ENCODE measurements at regions of chr14 and their contacts with region 1.

Region 1: GRCh38 chr14:25803386-25804018 is 753.6 kb upstream of the STXBP6 start:
- DNase-seq: no peak
- H3K4me3 ChIP-seq: no peak overlapping the region
- H3K27ac ChIP-seq: no peak overlapping the region
- H3K4me1 ChIP-seq: no peaks in the 10 kb centered on the region
- H3K27me3 ChIP-seq: no peaks in the 10 kb centered on the region
- CTCF ChIP-seq: no peak
- EP300 ChIP-seq: no peak
- POLR2A ChIP-seq: no peak

Region 2: GRCh38 chr14:26113930-26114329 is 310.4 kb after region 1 on chr14:
- in situ Hi-C with region 1: no loop called
- intact Hi-C with region 1: no loop called
- DNase-seq: no peak
- H3K4me3 ChIP-seq: no peak overlapping the region
- H3K27ac ChIP-seq: no peak overlapping the region
- H3K4me1 ChIP-seq: no peaks in the 10 kb centered on the region
- H3K27me3 ChIP-seq: no peaks in the 10 kb centered on the region
- CTCF ChIP-seq: no peak
- EP300 ChIP-seq: no peak
- POLR2A ChIP-seq: no peak

Region 3: GRCh38 chr14:26984311-26985177 is 1181.0 kb after region 1 on chr14:
- in situ Hi-C with region 1: loop called in 1 of 4 experiments (anchors 25 kb)
- intact Hi-C with region 1: no loop called
- DNase-seq: peak; percentile 64
- H3K4me3 ChIP-seq: no peak overlapping the region
- H3K27ac ChIP-seq: no peak overlapping the region
- H3K4me1 ChIP-seq: no peaks in the 10 kb centered on the region
- H3K27me3 ChIP-seq: no peaks in the 10 kb centered on the region
- CTCF ChIP-seq: peak; percentile 58 to 69 (median 65)
- EP300 ChIP-seq: no peak
- POLR2A ChIP-seq: no peak

Region 4: DNA sequence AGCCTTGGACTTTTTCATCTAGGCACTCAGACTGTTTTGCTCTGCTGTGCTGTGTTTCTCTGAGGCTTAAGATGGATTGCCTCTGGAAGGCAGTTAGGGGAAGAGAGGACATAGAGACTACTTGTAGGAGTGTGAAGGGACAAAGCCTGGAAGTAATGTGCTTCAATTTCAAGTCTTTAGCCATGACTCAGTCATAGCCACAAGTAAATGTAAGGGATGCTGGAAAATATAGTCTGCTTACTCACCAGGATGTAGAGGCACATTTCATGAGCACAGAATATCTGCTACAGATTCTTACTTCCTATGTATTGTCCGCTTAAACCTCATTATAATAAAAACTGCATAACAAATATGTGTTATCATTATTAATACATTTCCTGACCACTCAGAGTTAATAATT is 1588.7 kb after region 1 on chr14:
- in situ Hi-C with region 1: no loop called
- intact Hi-C with region 1: loop called (anchors 5 kb)
- DNase-seq: no peak
- H3K4me3 ChIP-seq: no peak overlapping the region
- H3K27ac ChIP-seq: no peak overlapping the region
- H3K4me1 ChIP-seq: no peaks in the 10 kb centered on the region
- H3K27me3 ChIP-seq: no peaks in the 10 kb centered on the region
- CTCF ChIP-seq: no peak
- EP300 ChIP-seq: no peak
- POLR2A ChIP-seq: no peak